Sigmoid colon (tissue), 7 donors: ENCODE measurements at regions of chr4 and their contacts with region 1.

Region 1: DNA sequence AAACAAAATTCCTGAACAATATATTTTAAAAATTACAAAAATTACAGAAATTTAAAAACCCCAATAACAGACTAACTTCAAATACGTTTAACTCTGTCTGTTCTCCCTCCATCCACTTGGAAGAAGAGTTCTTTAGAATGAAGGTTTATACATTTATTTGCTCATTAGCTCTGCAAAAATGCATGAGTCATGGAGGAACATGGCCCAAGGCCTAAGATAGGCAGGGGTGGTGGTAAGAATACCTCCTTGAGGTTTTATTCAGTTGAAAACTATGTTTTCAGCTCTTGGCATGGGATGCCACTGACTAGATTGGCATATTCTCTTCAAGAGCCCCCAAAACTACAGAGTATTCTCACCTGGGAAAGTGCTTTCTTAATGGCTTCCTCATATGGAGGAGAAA is 8.8 kb upstream of the LRRC66 start:
- DNase-seq: no peak
- H3K4me3 ChIP-seq: no peak overlapping the region
- H3K27ac ChIP-seq: no peak overlapping the region
- H3K4me1 ChIP-seq: peaks cover 0 to 13% (median 2%) of the 10 kb centered on the region in 4 donors
- H3K27me3 ChIP-seq: no peaks in the 10 kb centered on the region
- CTCF ChIP-seq: no peak
- EP300 ChIP-seq: no peak
- POLR2A ChIP-seq: no peak

Region 2: GRCh38 chr4:51895813-51896408 is 133.1 kb before region 1 on chr4:
- intact Hi-C with region 1: loop called (anchors 5 kb)
- DNase-seq: peak; percentile 78
- H3K4me3 ChIP-seq: no peak overlapping the region
- H3K27ac ChIP-seq: peak overlapping the region; percentile 20 to 61 (median 43)
- H3K4me1 ChIP-seq: peaks cover 0 to 20% (median 3%) of the 10 kb centered on the region in 4 donors
- H3K27me3 ChIP-seq: no peaks in the 10 kb centered on the region
- CTCF ChIP-seq: peak; percentile 56 to 75 (median 72)
- EP300 ChIP-seq: no peak
- POLR2A ChIP-seq: no peak

Region 3: GRCh38 chr4:52234561-52235440 is 205.8 kb after region 1 on chr4:
- intact Hi-C with region 1: no loop called
- DNase-seq: no peak
- H3K4me3 ChIP-seq: no peak overlapping the region
- H3K27ac ChIP-seq: no peak overlapping the region
- H3K4me1 ChIP-seq: no peaks in the 10 kb centered on the region
- H3K27me3 ChIP-seq: no peaks in the 10 kb centered on the region
- CTCF ChIP-seq: peak in 2 of 4 experiments; percentile 18 to 41
- EP300 ChIP-seq: no peak
- POLR2A ChIP-seq: no peak